ENCODE measurements at regions of chrX and their contacts with region 1.

Region 1: GRCh38 chrX:136147315-136147901 is at the start of gene FHL1:
- DNase-seq: no peak
- H3K4me3 Mint-ChIP-seq: peak within 1 kb of the TSS; percentile 60
- H3K27ac Mint-ChIP-seq: no peak within 1 kb of the TSS
- H3K4me1 Mint-ChIP-seq: no peaks in the 10 kb centered on the region
- H3K27me3 Mint-ChIP-seq: peaks cover 39% of the 10 kb centered on the region
- CTCF ChIP-seq: no peak
- total RNA-seq, gene FHL1: 0.54 and 0.73 TPM in 2 replicates

Region 2: GRCh38 chrX:136076942-136077341 is 70.5 kb before region 1 on chrX:
- CTCF ChIA-PET with region 1: no interaction called
- intact Hi-C with region 1: loop called (anchors 10 kb)
- DNase-seq: no peak
- H3K4me3 Mint-ChIP-seq: no peak overlapping the region
- H3K27ac Mint-ChIP-seq: no peak overlapping the region
- H3K4me1 Mint-ChIP-seq: no peaks in the 10 kb centered on the region
- H3K27me3 Mint-ChIP-seq: peaks cover 81% of the 10 kb centered on the region
- CTCF ChIP-seq: no peak